BJ (cell line): ENCODE measurements at regions of chr11 and their contacts with region 1.

Region 1: DNA sequence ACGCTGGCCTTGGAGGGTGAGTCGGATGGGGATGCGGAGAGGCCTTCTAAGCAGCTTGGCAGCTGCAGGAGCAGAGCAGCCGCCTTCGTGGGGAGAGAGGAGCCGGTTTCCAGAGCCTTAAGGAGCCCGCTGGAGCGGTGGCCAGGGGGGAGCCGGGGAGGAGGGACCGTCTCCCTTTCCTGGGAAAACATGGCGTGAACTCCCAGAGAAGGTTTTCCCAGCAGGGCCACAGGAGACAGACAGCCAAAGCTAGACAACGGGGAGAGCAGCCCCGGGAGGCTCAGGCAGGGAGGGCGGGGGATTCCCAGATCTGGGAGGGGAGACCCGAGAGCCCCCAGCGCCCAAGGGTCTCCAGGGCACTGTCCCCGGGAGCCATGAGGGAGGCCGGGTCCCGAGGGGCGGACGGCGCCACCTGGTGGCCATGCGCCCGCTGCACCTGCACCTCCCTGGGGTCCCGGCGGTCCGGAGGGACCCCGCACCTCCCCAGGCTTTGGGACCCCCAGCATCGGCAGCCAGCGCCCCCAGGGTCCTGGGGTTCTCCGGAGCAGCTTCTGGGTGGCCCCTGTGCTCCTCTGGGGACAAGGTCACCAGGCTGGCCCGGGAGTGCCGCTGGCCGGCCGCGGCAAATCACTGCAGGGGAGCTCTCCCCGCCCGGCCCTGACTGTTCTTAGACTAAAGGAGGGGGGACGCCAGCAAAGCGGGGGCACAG is 2.4 kb upstream of the SYT8 start:
- DNase-seq: no peak
- H3K4me3 ChIP-seq: no peak overlapping the region
- H3K27me3 ChIP-seq: peaks cover 2% of the 10 kb centered on the region; the same call in 1 of the 2 replicates
- CTCF ChIP-seq: peak; percentile 95

Region 2: DNA sequence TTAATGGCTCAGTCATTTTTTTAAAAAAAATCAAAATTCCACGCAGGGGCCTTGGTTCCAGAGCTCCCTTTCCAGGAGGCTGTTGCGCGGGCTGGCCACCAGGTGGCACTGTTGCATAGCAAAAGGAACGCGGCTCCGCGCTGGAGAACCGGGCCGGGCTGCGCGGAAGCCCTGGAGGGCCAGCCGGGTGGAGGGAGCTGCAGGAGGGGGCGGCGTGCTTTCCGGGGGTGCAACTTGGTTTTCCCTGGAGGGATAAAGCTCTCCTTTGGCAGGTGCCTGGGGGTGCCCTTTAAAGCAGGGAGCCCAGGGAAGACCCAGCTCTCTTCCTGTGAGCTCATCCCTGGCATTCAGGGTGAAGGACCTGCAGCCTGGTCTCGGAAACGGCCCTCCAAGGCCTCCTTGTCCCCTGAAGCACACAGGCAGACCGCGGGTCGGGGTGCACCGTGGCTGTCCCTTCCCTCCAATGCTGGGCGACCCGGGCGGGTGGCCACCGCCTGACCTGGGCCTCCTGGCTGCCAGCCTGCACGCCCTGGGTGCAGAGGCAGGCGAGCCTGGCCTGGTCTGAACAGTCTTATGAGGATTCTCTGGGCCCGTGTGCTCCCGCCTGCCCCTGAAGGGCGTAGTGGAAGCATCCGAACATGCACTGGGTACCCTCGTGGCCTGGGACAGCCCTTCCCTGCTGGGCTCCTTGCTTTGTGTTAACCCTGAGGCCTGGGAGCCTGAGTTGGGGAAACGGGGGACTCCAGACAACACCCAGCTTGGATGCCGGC is 179.4 kb before region 1 on chr11:
- CTCF ChIA-PET with region 1: interaction called, 67 read pairs
- POLR2A ChIA-PET with region 1: no interaction called
- DNase-seq: no peak
- H3K4me3 ChIP-seq: no peak overlapping the region
- H3K27me3 ChIP-seq: peaks cover 6% of the 10 kb centered on the region
- CTCF ChIP-seq: peak; percentile 96

Region 3: DNA sequence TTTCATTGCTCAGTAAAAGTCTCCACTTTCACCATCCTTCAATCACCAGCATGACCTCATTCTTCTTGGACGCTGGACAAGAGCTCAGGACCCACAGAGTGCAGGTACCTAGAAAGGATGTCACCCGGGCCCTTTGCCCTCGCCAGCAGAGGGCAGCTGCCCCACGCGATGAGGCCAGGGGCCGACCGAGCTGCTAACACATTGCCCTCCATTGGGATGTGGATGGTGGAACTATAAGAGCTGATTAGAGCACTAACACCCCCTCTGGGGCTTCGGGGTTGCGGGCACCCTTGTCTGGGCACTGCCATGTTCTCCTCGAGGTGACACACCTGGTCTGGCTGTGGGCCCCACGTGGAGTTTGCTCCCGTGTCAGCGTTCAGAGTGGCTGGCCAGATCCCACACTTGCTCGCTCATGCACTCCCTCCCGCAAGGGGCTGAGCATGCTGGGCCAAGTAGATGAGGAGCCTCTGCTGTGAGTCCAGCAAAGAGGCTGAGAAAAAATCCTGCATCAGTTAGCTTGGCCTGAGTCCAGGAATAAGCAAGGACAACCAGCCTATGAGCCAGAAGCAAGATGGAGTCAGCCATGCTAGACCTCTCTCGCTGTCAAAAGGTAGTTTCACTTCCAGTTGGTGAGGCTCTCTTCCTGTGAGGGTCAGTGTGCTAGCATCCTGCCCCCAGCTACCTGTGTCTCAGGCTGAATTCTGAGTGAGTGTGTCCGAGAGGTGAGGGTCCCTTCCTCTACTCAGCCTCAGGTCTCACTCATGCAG is 125.5 kb before region 1 on chr11:
- CTCF ChIA-PET with region 1: interaction called, 76 read pairs
- POLR2A ChIA-PET with region 1: no interaction called
- DNase-seq: no peak
- H3K4me3 ChIP-seq: no peak overlapping the region
- H3K27me3 ChIP-seq: peaks cover 10% of the 10 kb centered on the region
- CTCF ChIP-seq: peak; percentile 32; the same call in 1 of the 2 replicates

Region 4: DNA sequence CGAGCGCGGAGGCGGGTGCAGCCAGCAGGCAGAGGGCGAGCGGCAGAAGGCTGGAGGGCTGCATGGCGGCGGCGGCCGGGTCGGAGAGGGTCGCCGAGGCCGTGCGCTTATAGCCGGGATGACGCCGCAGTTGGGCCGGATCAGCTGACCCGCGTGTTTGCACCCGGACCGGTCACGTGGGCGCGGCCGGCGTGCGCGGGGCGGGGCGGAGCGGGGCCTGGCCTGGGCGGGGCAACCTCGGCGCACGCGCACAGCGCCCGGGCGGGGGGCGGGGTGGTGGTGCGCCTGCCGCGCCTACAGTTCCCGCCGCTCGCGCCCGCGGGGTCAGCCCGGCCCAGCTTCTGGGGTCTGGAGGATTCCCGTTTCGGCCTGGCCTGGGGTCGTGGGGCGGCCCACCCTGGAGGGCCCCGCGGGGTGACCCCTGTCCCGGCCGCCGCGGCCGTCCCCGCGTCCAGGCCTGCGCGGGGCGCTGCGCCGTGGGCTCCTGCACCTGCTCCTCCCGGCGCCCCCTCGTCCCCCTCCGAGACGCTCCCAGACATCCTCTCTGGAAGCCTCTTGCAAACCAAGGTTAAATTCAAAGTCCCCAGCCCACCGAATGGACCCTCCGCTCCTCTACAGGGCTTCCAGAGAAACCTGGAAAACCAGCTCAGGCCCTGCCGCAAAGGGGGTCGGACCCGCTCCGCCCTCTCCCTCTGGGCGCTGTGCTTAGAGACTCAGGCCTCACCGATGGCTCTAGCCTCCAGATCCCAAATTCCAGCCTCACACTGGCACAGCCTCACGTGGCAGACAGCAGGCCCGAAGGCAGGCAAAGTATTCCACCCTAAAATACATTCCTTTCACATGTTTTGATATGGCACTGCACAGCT is 68.3 kb before region 1 on chr11 and contains the start of gene CTSD:
- CTCF ChIA-PET with region 1: interaction called, 18 read pairs
- POLR2A ChIA-PET with region 1: interaction called, 13 read pairs
- DNase-seq: no peak
- H3K4me3 ChIP-seq: peak within 1 kb of the TSS; percentile 95
- H3K27me3 ChIP-seq: no peaks in the 10 kb centered on the region
- CTCF ChIP-seq: 0 out of 2 replicates have a peak, but pooled peaks have one; percentile 8
- polyA plus RNA-seq, gene CTSD: 89.9 and 206 TPM in 2 replicates

Region 5: DNA sequence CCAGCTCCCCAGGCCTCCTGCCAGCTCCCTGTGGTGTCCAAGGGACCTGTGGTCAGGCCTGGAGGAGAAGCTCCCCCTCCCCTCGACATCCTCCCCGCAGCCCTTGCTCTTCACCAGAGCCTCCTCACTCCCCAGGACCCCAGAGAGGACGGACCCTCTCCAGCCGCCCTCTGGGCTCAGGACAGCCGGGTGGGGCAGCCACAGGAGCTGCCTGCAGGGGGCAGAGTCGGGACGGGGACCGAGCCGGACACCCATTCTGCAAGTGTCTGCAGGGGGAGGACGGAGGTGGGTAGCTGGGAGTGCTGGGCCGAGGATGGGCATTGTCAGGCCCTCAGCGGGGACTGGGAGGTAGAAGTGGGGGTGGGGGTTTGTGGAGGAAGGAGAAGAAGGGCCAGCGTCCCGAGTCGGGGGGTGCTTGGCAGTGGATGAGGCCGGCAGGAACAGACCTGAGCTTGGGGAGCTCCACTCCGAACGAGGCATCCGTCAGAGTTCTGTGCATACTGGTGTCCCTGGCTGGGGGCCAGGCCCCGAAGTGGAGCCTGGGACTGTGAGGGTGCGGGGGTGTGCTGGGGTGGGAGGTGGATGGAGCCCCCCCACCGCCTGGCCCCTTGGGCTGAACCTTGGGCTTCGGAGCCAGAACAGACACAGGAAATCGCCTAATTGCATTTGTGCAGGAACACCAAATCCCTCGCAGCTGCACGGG is 44.1 kb after region 1 on chr11:
- CTCF ChIA-PET with region 1: interaction called, 16 read pairs
- POLR2A ChIA-PET with region 1: no interaction called
- DNase-seq: no peak
- H3K4me3 ChIP-seq: no peak overlapping the region
- H3K27me3 ChIP-seq: no peaks in the 10 kb centered on the region; the same call in 1 of the 2 replicates
- CTCF ChIP-seq: peak; percentile 70

Region 6: GRCh38 chr11:2036863-2037486 is 204.6 kb after region 1 on chr11:
- CTCF ChIA-PET with region 1: interaction called, 11 read pairs
- POLR2A ChIA-PET with region 1: no interaction called
- DNase-seq: no peak
- H3K4me3 ChIP-seq: no peak overlapping the region
- H3K27me3 ChIP-seq: no peaks in the 10 kb centered on the region
- CTCF ChIP-seq: no peak